Left lung (tissue), 14 donors: ENCODE measurements at regions of chr5 and their contacts with region 1.

Region 1: GRCh38 chr5:10283927-10284635 is 23.6 kb downstream of the CMBL start:
- DNase-seq: peak; percentile 72 to 96 (median 85)
- ATAC-seq: peak; percentile 95
- H3K4me3 ChIP-seq: no peak overlapping the region
- H3K27ac ChIP-seq: no peak overlapping the region
- H3K4me1 ChIP-seq: peaks cover 5 to 8% of the 10 kb centered on the region in 2 donors
- H3K27me3 ChIP-seq: no peaks in the 10 kb centered on the region
- CTCF ChIP-seq: peak; percentile 93 to 94

Region 2: DNA sequence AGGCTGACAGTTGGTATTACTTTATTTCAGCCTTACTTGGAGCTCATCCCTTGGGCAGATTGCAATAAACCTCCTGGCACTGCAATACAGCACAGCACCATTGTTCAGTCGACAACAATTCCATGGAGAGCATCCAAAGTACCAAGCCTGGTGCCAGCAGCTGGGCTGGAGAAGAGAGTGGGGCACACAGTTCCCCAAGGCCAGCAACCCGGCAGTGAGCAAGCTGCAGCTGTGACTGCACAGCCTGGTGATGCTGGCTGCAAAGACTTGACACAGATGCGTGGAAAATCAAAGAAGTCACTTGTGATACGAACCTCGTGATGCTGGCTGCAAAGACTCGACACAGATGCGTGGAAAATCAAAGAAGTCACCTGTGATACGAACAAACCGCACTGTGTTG is 159.8 kb before region 1 on chr5:
- intact Hi-C with region 1: no loop called
- DNase-seq: no peak
- ATAC-seq: no peak
- H3K4me3 ChIP-seq: no peak overlapping the region
- H3K27ac ChIP-seq: no peak overlapping the region
- H3K4me1 ChIP-seq: no peaks in the 10 kb centered on the region
- H3K27me3 ChIP-seq: no peaks in the 10 kb centered on the region
- CTCF ChIP-seq: no peak

Region 3: GRCh38 chr5:10424124-10424731 is 140.1 kb after region 1 on chr5:
- intact Hi-C with region 1: loop called in 1 of 2 experiments (anchors 10 kb)
- DNase-seq: peak in 2 of 4 donors; percentile 19 to 58
- ATAC-seq: peak; percentile 50
- H3K4me3 ChIP-seq: no peak overlapping the region
- H3K27ac ChIP-seq: no peak overlapping the region
- H3K4me1 ChIP-seq: peaks cover 0 to 33% of the 10 kb centered on the region in 2 donors
- H3K27me3 ChIP-seq: no peaks in the 10 kb centered on the region
- CTCF ChIP-seq: peak in 1 of 2 donors; percentile 24

Region 4: GRCh38 chr5:10825897-10826644 is 542.0 kb after region 1 on chr5:
- intact Hi-C with region 1: no loop called
- DNase-seq: no peak
- ATAC-seq: no peak
- H3K4me3 ChIP-seq: no peak overlapping the region
- H3K27ac ChIP-seq: no peak overlapping the region
- H3K4me1 ChIP-seq: no peaks in the 10 kb centered on the region
- H3K27me3 ChIP-seq: no peaks in the 10 kb centered on the region
- CTCF ChIP-seq: no peak